ENCODE measurements at regions of chr10 and their contacts with region 1.

Region 1: GRCh38 chr10:78985973-78986818 is 82.6 kb upstream of the ZMIZ1 start:
- H3K4me3 ChIP-seq: no peak overlapping the region
- H3K27ac ChIP-seq: no peak overlapping the region
- H3K4me1 ChIP-seq: no peaks in the 10 kb centered on the region
- CTCF ChIP-seq: no peak

Region 2: GRCh38 chr10:78960316-78960800 is 25.8 kb before region 1 on chr10:
- CTCF ChIA-PET with region 1: no interaction called
- POLR2A ChIA-PET with region 1: no interaction called
- H3K4me3 ChIP-seq: no peak overlapping the region
- H3K27ac ChIP-seq: no peak overlapping the region
- H3K4me1 ChIP-seq: no peaks in the 10 kb centered on the region
- CTCF ChIP-seq: no peak

Region 3: GRCh38 chr10:78973901-78974616 is 12.1 kb before region 1 on chr10:
- CTCF ChIA-PET with region 1: interaction called, 11 read pairs
- POLR2A ChIA-PET with region 1: interaction called, 5 read pairs
- H3K4me3 ChIP-seq: peak overlapping the region; percentile 36
- H3K27ac ChIP-seq: peak overlapping the region; percentile 92
- H3K4me1 ChIP-seq: peaks cover 11% of the 10 kb centered on the region
- CTCF ChIP-seq: peak; percentile 21; the same call in 1 of the 2 replicates

Region 4: GRCh38 chr10:79001082-79001885 is 15.1 kb after region 1 on chr10:
- CTCF ChIA-PET with region 1: no interaction called
- POLR2A ChIA-PET with region 1: no interaction called
- H3K4me3 ChIP-seq: no peak overlapping the region
- H3K27ac ChIP-seq: no peak overlapping the region
- H3K4me1 ChIP-seq: no peaks in the 10 kb centered on the region
- CTCF ChIP-seq: no peak

Measured in HEK293 (cell line).